H1 (cell line): ENCODE measurements at regions of chr4 and their contacts with region 1.

Region 1: GRCh38 chr4:54971474-54971950 is 153.9 kb downstream of the KDR start:
- DNase-seq: no peak
- H3K4me3 ChIP-seq: no peak overlapping the region
- H3K27ac ChIP-seq: no peak overlapping the region
- H3K4me1 ChIP-seq: peaks cover 0 to under 1% (median 0%) of the 10 kb centered on the region in 4 experiments; a peak in 1 of 7 replicates
- H3K27me3 ChIP-seq: no peaks in the 10 kb centered on the region
- CTCF ChIP-seq: peak in 2 of 3 experiments; percentile 50 to 65; a peak in 3 of 4 replicates
- EP300 ChIP-seq: no peak
- POLR2A ChIP-seq: no peak
- RAD21 ChIP-seq: peak; percentile 69 to 73

Region 2: GRCh38 chr4:54954656-54955326 is 16.7 kb before region 1 on chr4:
- CTCF ChIA-PET with region 1: interaction called, 13 read pairs
- POLR2A ChIA-PET with region 1: no interaction called
- DNase-seq: no peak
- H3K4me3 ChIP-seq: no peak overlapping the region
- H3K27ac ChIP-seq: no peak overlapping the region
- H3K4me1 ChIP-seq: no peaks in the 10 kb centered on the region
- H3K27me3 ChIP-seq: no peaks in the 10 kb centered on the region
- CTCF ChIP-seq: no peak
- EP300 ChIP-seq: no peak
- POLR2A ChIP-seq: no peak
- RAD21 ChIP-seq: no peak

Region 3: DNA sequence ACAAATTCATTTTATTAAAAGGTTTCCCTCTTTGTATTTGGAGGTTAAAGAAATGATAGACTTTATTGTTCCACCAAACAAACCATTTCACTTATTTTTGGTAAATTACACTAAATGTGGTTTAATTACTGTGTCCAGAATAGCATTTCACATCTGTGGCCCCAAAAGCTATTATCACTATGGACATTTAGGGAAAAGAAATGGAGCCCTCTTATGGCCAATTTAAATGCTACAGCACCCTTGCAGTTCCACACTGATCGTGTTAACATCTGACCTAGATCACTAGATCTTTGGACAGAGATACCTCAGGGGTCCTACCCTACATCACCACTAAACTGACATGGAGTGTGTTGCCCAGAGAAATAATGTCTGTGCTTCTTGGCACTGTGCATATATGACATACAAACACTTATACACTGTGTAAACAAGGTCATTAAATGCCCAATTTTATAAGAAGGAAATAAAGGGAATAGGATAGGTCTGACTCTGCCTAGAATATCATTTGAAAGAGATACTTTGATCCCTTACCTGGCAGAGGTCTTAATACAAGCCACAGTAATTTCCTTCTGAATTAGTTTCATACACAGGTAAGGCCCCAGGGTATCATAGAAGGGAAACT is 10.0 kb before region 1 on chr4:
- CTCF ChIA-PET with region 1: interaction called, 40 read pairs
- POLR2A ChIA-PET with region 1: no interaction called
- DNase-seq: no peak
- H3K4me3 ChIP-seq: no peak overlapping the region
- H3K27ac ChIP-seq: no peak overlapping the region
- H3K4me1 ChIP-seq: no peaks in the 10 kb centered on the region
- H3K27me3 ChIP-seq: no peaks in the 10 kb centered on the region; a peak in 2 of 7 replicates
- CTCF ChIP-seq: peak in 2 of 3 experiments; percentile 55 to 65; a peak in 3 of 4 replicates
- EP300 ChIP-seq: no peak
- POLR2A ChIP-seq: no peak
- RAD21 ChIP-seq: peak; percentile 81 to 82